Right cardiac atrium (tissue), 5 donors: ENCODE measurements at regions of chr7 and their contacts with region 1.

Region 1: DNA sequence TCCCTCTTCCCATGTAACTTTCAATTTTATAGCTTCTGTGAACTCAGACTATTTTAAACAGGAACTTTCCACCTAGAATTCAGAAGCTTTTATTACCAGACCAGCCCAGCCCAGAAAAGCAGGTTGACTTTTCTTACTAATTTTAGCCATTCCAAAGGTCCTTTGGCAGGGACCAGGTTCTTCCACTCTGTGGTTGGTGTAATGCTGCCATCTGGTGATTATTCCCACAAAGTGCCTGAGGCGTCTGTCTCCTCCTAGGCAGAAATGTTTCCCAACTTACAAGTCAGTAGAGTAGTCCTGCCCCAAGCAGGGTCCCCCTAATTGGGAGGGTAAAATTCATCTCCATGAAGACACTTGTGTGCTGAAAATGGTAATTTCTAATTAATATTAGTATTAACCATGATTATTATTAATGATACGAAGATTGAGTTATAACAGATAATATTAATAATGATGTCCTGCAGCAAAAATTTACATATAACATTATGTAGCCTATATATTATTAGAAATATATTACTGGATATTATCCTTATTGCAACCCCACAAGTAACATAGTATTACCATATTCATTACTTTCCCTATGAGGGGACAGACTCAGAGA is 53.0 kb upstream of the PPP1R17 start:
- DNase-seq: peak in 2 of 3 donors; percentile 20 to 47
- ATAC-seq: peak; percentile 86 to 87
- H3K4me3 ChIP-seq: no peak overlapping the region
- H3K27ac ChIP-seq: no peak overlapping the region
- H3K4me1 ChIP-seq: no peaks in the 10 kb centered on the region
- H3K27me3 ChIP-seq: no peaks in the 10 kb centered on the region

Region 2: DNA sequence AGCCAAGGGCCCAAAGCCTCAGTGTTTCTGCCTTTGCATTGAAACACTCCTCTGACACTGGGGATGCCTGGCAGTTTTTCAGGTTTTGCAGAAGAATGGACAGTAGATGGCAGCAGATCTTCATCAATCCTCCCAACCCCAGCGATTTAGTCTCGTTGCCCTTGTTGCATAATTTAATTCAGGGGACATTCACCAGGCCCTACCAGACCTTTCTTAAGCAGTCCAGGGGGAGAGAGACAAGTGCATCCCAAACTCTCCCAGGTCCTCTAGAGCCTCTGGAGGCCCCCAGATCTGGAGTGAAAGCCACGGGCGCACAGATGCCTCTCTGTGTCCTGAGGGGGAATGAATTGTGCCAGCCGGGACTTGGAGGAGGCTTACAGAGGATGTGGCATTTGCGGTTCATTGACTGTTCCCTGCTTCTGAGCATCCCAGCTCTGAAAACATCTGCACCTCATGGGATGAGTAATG is 833.2 kb before region 1 on chr7:
- intact Hi-C with region 1: loop called in 1 of 4 experiments (anchors 10 kb)
- DNase-seq: peak in 1 of 3 donors; percentile 53
- ATAC-seq: peak; percentile 65 to 66
- H3K4me3 ChIP-seq: no peak overlapping the region
- H3K27ac ChIP-seq: no peak overlapping the region
- H3K4me1 ChIP-seq: peaks cover 9% of the 10 kb centered on the region
- H3K27me3 ChIP-seq: no peaks in the 10 kb centered on the region

Region 3: GRCh38 chr7:31134246-31135188 is 499.5 kb before region 1 on chr7:
- intact Hi-C with region 1: loop called in 2 of 4 experiments (anchors 10 kb)
- DNase-seq: peak; percentile 76 to 90 (median 85)
- ATAC-seq: peak; percentile 97
- H3K4me3 ChIP-seq: no peak overlapping the region
- H3K27ac ChIP-seq: no peak overlapping the region
- H3K4me1 ChIP-seq: no peaks in the 10 kb centered on the region
- H3K27me3 ChIP-seq: no peaks in the 10 kb centered on the region

Region 4: GRCh38 chr7:31160941-31161340 is 473.1 kb before region 1 on chr7:
- intact Hi-C with region 1: no loop called
- DNase-seq: no peak
- ATAC-seq: no peak
- H3K4me3 ChIP-seq: no peak overlapping the region
- H3K27ac ChIP-seq: no peak overlapping the region
- H3K4me1 ChIP-seq: no peaks in the 10 kb centered on the region
- H3K27me3 ChIP-seq: peaks cover 3% of the 10 kb centered on the region

Region 5: GRCh38 chr7:31373337-31374289 is 260.4 kb before region 1 on chr7:
- intact Hi-C with region 1: loop called in 2 of 4 experiments (anchors 10 kb)
- DNase-seq: peak in 1 of 3 donors; percentile 19
- ATAC-seq: peak; percentile 52
- H3K4me3 ChIP-seq: no peak overlapping the region
- H3K27ac ChIP-seq: no peak overlapping the region
- H3K4me1 ChIP-seq: no peaks in the 10 kb centered on the region
- H3K27me3 ChIP-seq: no peaks in the 10 kb centered on the region

Region 6: DNA sequence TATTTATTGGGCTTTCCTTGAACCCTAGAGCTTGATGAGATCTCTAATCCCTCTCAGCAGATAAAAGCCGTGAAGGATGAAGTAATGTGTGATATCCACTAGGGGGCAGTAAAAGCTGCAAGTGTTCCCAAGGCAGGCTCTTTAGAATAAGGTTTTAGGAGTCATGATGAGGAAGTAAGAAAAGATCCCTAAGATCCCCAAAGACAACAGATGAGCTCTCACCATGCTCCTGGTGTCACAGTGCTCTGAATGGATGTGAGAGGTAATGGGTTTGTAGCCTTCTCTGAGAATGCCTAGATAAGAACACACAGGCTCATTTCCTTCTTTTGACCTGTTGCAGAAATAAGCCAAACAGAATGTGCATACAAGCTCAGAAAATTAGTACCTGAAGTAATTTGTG is 190.5 kb before region 1 on chr7:
- intact Hi-C with region 1: loop called in 3 of 4 experiments (anchors 5 to 10 kb)
- DNase-seq: no peak
- ATAC-seq: peak; percentile 63
- H3K4me3 ChIP-seq: no peak overlapping the region
- H3K27ac ChIP-seq: no peak overlapping the region
- H3K4me1 ChIP-seq: no peaks in the 10 kb centered on the region
- H3K27me3 ChIP-seq: no peaks in the 10 kb centered on the region

Region 7: GRCh38 chr7:31595390-31595789 is 38.6 kb before region 1 on chr7:
- intact Hi-C with region 1: no loop called
- DNase-seq: no peak
- ATAC-seq: no peak
- H3K4me3 ChIP-seq: no peak overlapping the region
- H3K27ac ChIP-seq: no peak overlapping the region
- H3K4me1 ChIP-seq: no peaks in the 10 kb centered on the region
- H3K27me3 ChIP-seq: no peaks in the 10 kb centered on the region